ENCODE measurements at regions of chr12 and their contacts with region 1.

Region 1: DNA sequence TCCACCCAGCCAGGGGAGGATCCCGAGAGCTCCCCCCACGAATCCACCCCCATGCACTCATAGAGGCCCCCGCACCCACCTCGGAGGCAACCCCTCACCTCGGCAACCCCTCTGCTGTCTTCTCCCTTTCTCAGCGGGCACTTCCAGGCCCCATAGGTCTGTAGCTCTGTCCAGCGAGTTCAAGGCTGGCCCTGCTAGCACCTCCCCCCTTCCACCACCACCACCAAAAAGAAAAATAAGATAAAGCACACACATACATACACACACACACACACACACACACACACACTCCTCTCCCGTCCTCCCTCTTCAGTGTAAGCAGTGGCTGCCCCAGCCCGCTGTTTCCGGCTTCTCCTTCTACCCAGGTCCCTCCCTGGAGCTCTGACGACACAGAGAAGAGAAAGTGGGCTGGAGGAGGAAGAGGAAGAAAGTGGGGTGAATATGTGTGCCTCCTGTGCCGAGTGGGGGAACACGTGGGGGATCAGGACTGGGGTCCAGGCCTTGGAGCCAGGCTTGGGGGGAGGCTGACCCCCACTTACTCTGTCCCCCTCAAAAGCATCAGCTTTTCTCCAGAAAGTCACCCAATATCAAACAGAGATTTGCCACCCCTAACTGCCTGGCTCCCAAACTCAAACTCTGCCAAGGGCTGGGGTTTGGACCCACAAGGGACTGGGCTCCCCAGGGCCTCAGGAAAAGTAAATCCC is at the start of gene STAT6:
- DNase-seq: no peak
- H3K4me3 ChIP-seq: peak within 1 kb of the TSS; percentile 9 to 59 (median 50)
- H3K27ac ChIP-seq: peak within 1 kb of the TSS; percentile 87
- H3K4me1 ChIP-seq: peaks cover 3 to 31% (median 15%) of the 10 kb centered on the region in 4 experiments
- H3K27me3 ChIP-seq: no peaks in the 10 kb centered on the region
- CTCF ChIP-seq: no peak
- EP300 ChIP-seq: no peak
- POLR2A ChIP-seq: no peak
- RAD21 ChIP-seq: no peak
- total RNA-seq, gene STAT6: 26.8 and 32.9 TPM in 2 replicates

Region 2: DNA sequence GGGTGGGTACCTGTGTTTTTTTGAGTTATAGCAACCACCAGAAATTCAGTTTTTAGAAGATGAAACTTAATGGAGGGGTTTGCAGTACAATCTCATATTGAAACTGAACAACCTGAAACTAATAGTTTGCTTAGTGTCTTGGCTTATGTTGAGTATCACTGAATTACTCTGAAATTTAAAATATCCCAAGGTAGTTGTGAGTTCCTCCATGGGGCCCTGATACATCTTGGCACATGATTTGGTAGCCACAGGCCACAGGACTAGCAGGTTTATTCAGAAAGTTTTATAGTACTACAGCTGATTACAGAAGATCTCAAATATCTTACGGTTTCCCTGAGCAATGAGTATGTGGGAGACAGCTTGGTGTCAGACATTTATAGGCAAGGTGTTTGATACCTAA is 433.5 kb before region 1 on chr12:
- CTCF ChIA-PET with region 1: no interaction called
- POLR2A ChIA-PET with region 1: no interaction called
- DNase-seq: no peak
- H3K4me3 ChIP-seq: no peak overlapping the region
- H3K27ac ChIP-seq: no peak overlapping the region
- H3K4me1 ChIP-seq: peaks cover 0 to 3% (median 0%) of the 10 kb centered on the region in 4 experiments; a peak in 2 of 7 replicates
- H3K27me3 ChIP-seq: no peaks in the 10 kb centered on the region
- CTCF ChIP-seq: no peak
- EP300 ChIP-seq: no peak
- POLR2A ChIP-seq: no peak
- RAD21 ChIP-seq: no peak

Region 3: DNA sequence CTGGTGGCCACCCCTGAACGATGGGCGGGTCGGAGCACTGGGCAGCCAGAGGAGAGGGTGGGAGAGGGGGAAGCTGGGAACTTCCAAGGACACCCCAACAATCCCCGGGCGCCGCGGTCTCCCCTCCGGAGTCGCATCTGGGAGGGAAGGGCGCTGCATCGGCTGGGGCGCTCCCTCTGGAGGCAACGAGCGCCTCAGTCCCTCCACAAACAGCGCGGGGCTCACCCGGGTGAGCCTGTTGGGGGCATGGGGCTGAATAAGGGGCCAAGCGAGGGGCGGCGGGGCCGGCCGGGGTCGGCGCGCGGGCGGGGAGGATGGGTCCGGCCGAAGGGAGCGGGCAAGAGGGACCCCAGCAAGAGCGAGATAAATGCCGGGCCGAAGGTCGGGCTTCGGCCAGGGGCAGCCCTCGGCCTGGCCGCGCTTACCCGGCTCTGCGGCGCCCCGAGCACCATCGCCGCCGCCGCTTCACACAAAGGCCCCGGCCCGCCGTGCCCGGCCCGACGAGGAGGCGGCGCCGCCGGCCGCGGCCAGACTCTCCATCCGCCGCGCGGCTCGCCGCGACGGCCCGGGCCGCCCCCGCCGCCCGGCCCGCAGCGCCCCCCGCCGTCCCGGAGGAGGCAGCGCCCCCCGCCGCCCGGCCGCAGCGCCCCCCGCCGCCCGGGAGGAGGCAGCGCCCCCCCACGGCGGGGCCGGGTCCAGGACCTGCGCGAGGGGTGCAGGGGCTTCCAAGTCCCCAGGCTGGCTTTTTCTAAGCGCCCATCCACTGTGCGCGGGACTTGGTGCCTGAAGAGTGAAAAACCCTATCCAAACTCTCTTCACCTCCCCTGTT is 105.0 kb before region 1 on chr12 and contains the start of gene ZBTB39:
- CTCF ChIA-PET with region 1: interaction called, 49 read pairs
- POLR2A ChIA-PET with region 1: interaction called, 17 read pairs
- DNase-seq: peak in 1 of 2 experiments; percentile 81
- H3K4me3 ChIP-seq: peak within 1 kb of the TSS; percentile 73 to 96 (median 82)
- H3K27ac ChIP-seq: peak within 1 kb of the TSS; percentile 60; the same call in 1 of the 2 replicates
- H3K4me1 ChIP-seq: peaks cover 2 to 14% (median 8%) of the 10 kb centered on the region in 4 experiments; a peak in 6 of 7 replicates
- H3K27me3 ChIP-seq: no peaks in the 10 kb centered on the region
- CTCF ChIP-seq: peak; percentile 35 to 88 (median 62)
- EP300 ChIP-seq: no peak
- POLR2A ChIP-seq: peak; percentile 56 to 69; a peak in 2 of 3 replicates
- RAD21 ChIP-seq: 0 out of 4 replicates have a peak, but pooled peaks of 1 of the 2 experiments have one; percentile 5
- total RNA-seq, gene ZBTB39: 24.5 and 25.0 TPM in 2 replicates

Region 4: DNA sequence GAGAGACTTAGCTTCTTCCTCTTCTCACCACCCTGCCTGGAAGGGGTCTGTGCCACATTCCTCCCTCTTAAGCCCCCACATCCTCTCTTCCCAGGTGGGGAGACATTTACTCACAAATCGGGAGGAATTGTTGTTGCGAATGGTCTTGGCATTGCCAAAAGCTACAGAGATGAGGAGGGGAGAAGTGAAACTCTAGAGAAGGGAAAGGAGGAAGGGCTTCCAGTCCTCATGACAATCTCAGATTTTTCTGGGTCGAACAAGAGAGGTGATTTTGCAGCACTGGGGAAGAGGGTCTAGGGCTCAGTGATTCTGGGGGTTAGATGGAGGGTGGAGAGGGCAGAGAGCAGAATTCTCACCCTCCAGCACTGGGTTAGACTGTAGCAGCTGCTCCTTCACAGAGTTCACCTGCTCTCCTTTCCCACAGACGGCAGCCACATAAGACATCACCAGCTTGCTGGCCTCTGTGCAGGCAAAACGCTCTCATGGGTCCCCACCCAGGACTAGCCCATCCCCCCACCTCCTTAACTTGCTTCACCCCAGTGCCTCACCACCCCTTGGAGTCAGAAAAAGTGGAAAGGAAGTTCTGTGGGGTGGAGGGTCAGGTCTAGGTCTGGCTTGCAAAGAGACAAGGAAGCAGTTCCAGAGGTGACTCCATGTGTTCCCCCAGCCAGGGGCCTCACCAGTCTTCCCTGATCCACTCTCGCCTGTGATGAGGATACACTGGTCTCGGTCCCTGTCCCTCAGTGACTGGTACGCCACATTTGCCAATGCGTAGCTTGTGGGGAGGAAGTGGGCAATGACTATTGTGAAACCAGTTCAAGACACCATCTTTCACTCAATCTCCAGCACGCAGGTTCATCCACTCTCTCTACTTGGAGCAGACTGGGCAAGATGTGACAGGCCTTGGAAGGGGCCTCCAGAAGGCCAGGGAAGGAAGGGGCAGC is 64.0 kb before region 1 on chr12:
- CTCF ChIA-PET with region 1: interaction called, 12 read pairs
- POLR2A ChIA-PET with region 1: interaction called, 7 read pairs
- DNase-seq: no peak
- H3K4me3 ChIP-seq: no peak overlapping the region
- H3K27ac ChIP-seq: no peak overlapping the region
- H3K4me1 ChIP-seq: no peaks in the 10 kb centered on the region
- H3K27me3 ChIP-seq: no peaks in the 10 kb centered on the region
- CTCF ChIP-seq: no peak
- EP300 ChIP-seq: no peak
- POLR2A ChIP-seq: no peak
- RAD21 ChIP-seq: no peak

Region 5: DNA sequence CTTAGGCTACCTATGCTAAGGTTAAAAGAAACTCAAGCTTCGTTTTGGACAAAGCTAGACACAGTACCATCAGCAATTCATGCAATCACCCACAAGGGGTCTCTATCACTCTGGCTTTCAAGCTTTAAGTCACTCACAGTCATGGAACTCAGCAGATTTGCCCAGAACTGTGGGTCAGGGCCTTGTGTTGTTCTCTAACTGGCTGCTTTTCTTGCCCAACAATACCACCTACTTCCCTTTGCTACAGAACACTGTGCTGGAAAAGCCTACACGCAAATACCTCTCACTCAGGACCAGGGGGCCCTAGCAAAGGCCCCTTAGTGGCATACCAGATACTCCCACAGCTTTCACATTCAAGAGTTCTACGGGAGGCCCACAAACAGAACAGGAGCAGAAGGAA is 41.7 kb before region 1 on chr12:
- CTCF ChIA-PET with region 1: interaction called, 225 read pairs
- POLR2A ChIA-PET with region 1: interaction called, 43 read pairs
- DNase-seq: no peak
- H3K4me3 ChIP-seq: no peak overlapping the region
- H3K27ac ChIP-seq: no peak overlapping the region
- H3K4me1 ChIP-seq: no peaks in the 10 kb centered on the region
- H3K27me3 ChIP-seq: no peaks in the 10 kb centered on the region
- CTCF ChIP-seq: peak in 2 of 3 experiments; percentile 90 to 94; a peak in 3 of 4 replicates
- EP300 ChIP-seq: no peak
- POLR2A ChIP-seq: no peak
- RAD21 ChIP-seq: peak; percentile 95 to 97

Region 6: DNA sequence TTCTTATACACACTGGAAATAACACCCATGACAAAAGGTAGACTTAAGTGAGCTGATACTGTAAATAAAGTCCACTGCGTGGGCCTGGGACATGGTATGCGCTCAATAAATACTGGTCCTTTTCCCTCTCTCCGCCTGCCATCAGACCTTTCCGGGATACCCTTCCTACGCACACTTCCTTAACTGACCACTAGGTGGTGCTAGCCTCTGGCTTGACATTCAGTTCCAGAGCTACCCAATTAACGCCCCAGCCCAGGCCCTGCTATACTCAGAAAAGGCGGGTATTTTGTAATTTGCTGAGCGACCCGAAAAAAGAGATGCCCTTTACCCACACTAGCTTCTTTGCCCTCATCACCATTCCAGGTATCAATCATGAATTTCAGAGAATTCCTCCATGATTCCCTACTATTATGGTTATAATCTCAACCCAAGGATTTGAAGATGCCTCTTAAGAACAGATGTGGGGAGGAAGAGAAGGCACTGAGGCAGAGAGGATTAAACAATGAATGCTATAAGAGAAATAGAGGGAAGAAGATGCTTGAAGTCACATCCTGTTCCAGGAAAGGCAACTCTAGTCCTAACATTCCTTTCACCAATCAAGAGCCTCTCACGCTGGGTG is 13.2 kb after region 1 on chr12:
- CTCF ChIA-PET with region 1: interaction called, 96 read pairs
- POLR2A ChIA-PET with region 1: interaction called, 105 read pairs
- DNase-seq: peak in 1 of 2 experiments; percentile 89
- H3K4me3 ChIP-seq: no peak overlapping the region
- H3K27ac ChIP-seq: no peak overlapping the region
- H3K4me1 ChIP-seq: peaks cover 0 to 5% (median 4%) of the 10 kb centered on the region in 4 experiments; a peak in 4 of 7 replicates
- H3K27me3 ChIP-seq: no peaks in the 10 kb centered on the region
- CTCF ChIP-seq: peak; percentile 83 to 99 (median 92)
- EP300 ChIP-seq: no peak
- POLR2A ChIP-seq: no peak
- RAD21 ChIP-seq: peak; percentile 83 to 85

Region 7: GRCh38 chr12:57190037-57190436 is 78.9 kb after region 1 on chr12:
- CTCF ChIA-PET with region 1: interaction called, 10 read pairs
- POLR2A ChIA-PET with region 1: no interaction called
- DNase-seq: no peak
- H3K4me3 ChIP-seq: no peak overlapping the region
- H3K27ac ChIP-seq: no peak overlapping the region
- H3K4me1 ChIP-seq: no peaks in the 10 kb centered on the region; a peak in 1 of 7 replicates
- H3K27me3 ChIP-seq: no peaks in the 10 kb centered on the region
- CTCF ChIP-seq: no peak
- EP300 ChIP-seq: no peak
- POLR2A ChIP-seq: no peak
- RAD21 ChIP-seq: no peak